ENCODE measurements at regions of chr1 and their contacts with region 1.

Region 1: DNA sequence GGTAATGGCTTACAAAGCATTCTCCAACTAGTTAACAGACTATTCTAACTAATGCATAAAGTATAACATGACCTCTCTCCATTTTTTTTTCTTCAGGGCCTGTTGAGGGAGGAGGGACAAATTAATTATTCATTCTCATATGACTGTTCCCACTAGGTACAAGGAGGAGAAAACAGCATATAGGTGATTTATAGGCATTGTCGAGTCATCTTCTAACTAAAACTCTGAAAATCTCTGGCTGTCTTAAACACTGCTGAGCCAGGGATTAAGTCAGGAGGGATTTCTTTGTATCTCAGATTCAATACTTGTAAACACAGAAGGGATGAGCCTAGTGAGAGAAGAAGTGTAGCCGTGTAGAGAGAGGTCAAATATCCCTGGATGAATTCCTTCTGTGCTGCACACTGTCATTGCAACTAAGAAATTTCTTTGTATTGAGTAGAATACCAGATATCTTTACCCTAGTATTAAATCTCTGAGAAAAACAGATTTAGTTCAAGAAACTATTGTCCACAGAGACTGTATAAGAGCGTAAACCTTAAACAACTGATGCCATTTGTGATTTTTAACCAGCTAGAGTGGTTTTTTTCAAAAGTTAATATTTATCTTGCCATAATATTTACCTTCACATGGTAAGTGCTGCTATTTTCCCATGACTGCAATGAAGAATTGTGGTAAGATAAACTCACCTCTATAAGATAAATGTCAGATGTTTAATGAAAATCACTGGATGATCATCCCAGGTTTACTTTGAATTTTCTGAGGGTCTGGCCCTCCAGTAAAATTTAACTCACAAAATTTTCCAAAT is 465.3 kb downstream of the RWDD3 start:
- DNase-seq: no peak
- H3K4me3 ChIP-seq: no peak overlapping the region
- H3K27ac ChIP-seq: no peak overlapping the region
- H3K4me1 ChIP-seq: peaks cover 0 to 8% (median 0%) of the 10 kb centered on the region in 4 donors
- H3K27me3 ChIP-seq: no peaks in the 10 kb centered on the region
- CTCF ChIP-seq: no peak
- EP300 ChIP-seq: no peak
- POLR2A ChIP-seq: no peak

Region 2: GRCh38 chr1:95752515-95753381 is 53.4 kb after region 1 on chr1:
- in situ Hi-C with region 1: loop called in 1 of 4 experiments (anchors 10 kb)
- intact Hi-C with region 1: no loop called
- DNase-seq: no peak
- H3K4me3 ChIP-seq: no peak overlapping the region
- H3K27ac ChIP-seq: no peak overlapping the region
- H3K4me1 ChIP-seq: no peaks in the 10 kb centered on the region
- H3K27me3 ChIP-seq: no peaks in the 10 kb centered on the region
- CTCF ChIP-seq: no peak
- EP300 ChIP-seq: no peak
- POLR2A ChIP-seq: no peak

Region 3: GRCh38 chr1:95994643-95995042 is 295.3 kb after region 1 on chr1:
- in situ Hi-C with region 1: no loop called
- intact Hi-C with region 1: no loop called
- DNase-seq: no peak
- H3K4me3 ChIP-seq: peak overlapping the region in 1 of 4 donors; percentile 16
- H3K27ac ChIP-seq: no peak overlapping the region
- H3K4me1 ChIP-seq: no peaks in the 10 kb centered on the region
- H3K27me3 ChIP-seq: no peaks in the 10 kb centered on the region
- CTCF ChIP-seq: no peak
- EP300 ChIP-seq: no peak
- POLR2A ChIP-seq: no peak